ENCODE measurements at regions of chr19 and their contacts with region 1.

Region 1: DNA sequence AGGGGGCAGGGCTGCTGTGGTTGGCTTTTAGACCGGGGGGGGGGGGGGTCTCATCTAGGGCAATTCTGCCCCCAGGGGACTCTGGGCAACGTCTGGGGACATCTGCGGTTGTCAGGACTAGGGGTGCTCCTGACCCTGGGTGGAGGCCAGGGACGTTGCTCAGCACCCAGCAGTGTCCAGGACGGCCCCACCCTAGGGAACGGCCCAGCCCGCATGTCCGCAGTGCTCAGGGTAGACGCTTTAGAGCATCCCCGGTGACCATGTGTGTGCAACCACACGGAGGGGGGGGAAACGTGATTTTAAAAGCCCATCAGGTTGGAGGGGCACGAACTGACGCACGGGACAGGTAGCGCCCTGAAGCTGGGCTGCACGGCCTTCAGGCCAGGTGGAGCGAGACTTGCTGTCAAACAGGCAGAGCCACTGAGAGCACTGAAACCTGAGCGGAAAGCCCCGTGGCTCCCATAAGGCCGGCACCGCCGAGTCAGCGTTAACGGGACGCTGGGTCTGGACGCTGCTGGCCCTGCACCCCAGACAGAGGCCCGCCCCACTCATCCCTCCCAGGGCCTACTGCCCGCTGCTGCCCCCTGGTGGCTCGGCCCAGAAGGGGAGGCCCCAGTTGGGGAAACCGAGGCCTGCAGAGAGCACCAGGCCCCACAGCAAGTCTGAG is 8.3 kb downstream of the CACTIN start:
- DNase-seq: peak; percentile 55
- H3K4me3 Mint-ChIP-seq: no peak overlapping the region
- H3K27ac Mint-ChIP-seq: no peak overlapping the region
- H3K4me1 Mint-ChIP-seq: peaks cover 13% of the 10 kb centered on the region
- H3K27me3 Mint-ChIP-seq: no peaks in the 10 kb centered on the region

Region 2: GRCh38 chr19:3586124-3586626 is 32.1 kb before region 1 on chr19:
- CTCF ChIA-PET with region 1: interaction called, 4 read pairs
- intact Hi-C with region 1: loop called (anchors 1 kb)
- DNase-seq: peak; percentile 34
- H3K4me3 Mint-ChIP-seq: peak overlapping the region; percentile 24
- H3K27ac Mint-ChIP-seq: no peak overlapping the region
- H3K4me1 Mint-ChIP-seq: no peaks in the 10 kb centered on the region
- H3K27me3 Mint-ChIP-seq: no peaks in the 10 kb centered on the region

Region 3: DNA sequence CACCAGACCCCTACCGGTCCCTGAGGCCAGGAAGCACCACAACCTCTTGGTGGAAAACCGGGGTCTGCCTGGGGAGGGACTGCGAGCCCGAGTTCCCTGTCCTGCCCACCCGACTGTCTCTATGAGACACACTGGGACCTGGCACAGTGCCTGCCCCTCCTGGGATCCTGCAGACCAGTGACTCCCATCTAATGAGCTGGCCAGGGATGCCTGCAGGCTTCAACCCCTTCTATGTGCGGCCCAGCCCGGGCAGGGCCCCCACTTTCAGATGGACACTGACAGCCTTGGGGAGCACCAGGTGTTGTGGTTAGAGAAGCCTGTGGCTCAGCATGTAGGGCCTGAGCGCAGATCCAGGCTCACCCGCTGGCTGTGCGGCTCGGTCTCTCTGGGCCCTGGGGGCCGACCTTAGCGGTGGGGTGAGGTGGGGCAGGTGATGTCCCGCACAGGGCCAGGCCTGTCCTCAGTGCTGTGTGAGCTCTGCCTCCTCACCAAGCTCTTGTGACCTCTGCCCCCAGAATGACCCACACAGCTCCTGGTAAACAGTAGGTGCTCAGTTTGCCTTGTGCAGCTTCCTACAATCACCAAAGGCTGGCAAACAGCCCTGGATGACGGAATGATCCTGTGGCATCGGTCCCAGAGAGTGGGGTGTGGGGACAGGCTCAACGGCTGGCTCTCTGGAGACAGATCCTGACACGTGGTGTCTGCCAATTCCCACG is 26.2 kb after region 1 on chr19:
- CTCF ChIA-PET with region 1: no interaction called
- intact Hi-C with region 1: no loop called
- DNase-seq: no peak
- H3K4me3 Mint-ChIP-seq: no peak overlapping the region
- H3K27ac Mint-ChIP-seq: no peak overlapping the region
- H3K4me1 Mint-ChIP-seq: no peaks in the 10 kb centered on the region
- H3K27me3 Mint-ChIP-seq: no peaks in the 10 kb centered on the region

Region 4: DNA sequence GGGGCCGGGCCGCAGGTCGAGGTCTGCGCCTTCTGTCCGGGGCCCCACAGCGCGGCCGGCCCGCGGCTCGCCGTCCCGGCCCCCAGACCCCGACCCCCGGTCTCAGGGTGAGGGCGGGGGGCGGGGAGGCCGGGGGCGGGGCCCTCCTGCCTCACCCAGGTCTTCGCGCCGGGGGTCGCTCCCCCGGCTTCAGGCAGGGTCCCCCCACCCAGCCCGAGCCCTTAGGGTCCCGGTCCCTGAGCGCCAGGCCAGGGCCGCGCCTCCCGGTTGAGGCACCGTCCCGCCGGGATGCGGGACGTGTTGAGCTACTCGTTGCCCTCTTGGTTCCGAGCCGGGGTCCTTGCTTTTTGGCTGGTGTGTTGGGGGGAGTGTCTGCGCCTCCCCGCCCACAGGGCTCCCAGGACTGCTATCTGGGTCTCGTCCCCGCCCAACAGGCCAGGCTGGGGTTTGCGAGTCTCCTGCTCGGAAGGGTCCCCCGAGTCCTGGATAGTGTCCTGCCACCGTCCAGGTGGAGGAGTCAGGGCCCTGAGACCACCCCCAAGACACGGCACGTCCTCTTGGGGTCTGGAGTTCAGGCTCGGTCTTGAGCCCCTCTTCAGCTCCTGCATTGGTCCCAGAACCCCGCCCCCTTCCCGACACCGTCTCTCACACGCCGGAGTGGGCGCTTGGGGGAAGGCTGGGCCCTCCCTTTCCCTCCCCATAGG is 389.7 kb after region 1 on chr19:
- CTCF ChIA-PET with region 1: no interaction called
- intact Hi-C with region 1: no loop called
- DNase-seq: peak; percentile 39
- H3K4me3 Mint-ChIP-seq: peak overlapping the region; percentile 84
- H3K27ac Mint-ChIP-seq: peak overlapping the region; percentile 79
- H3K4me1 Mint-ChIP-seq: peaks cover 36% of the 10 kb centered on the region
- H3K27me3 Mint-ChIP-seq: no peaks in the 10 kb centered on the region

Measured in activated naive CD4-positive, alpha-beta T cell treated with anti-CD3 and anti-CD28 coated beads for 36 hours (primary cell).